ENCODE measurements at regions of chr2 and their contacts with region 1.

Region 1: DNA sequence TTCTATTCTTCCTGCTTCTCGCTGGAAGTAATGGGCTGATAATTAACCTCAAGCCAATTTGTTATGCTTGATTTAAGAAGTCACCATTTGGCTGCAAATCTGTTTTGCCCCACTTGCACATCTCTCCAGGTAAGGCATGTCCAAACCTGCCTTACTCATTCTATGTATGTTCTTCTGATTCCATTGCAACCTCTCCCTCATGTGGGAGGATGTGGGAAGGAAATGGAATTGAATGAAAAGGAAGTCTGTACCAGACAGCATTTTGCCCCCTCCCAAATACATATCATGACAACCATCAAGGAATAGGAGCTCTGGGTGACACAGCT is 131.7 kb downstream of the NRP2 start:
- DNase-seq: no peak
- H3K4me3 ChIP-seq: no peak overlapping the region; a peak in 1 of 8 replicates
- H3K27ac ChIP-seq: no peak overlapping the region
- H3K4me1 ChIP-seq: peaks cover 0 to 6% (median 1%) of the 10 kb centered on the region in 4 experiments; a peak in 3 of 7 replicates
- H3K27me3 ChIP-seq: no peaks in the 10 kb centered on the region
- CTCF ChIP-seq: no peak
- EP300 ChIP-seq: no peak
- POLR2A ChIP-seq: no peak
- RAD21 ChIP-seq: no peak

Region 2: GRCh38 chr2:205769495-205769850 is 44.5 kb before region 1 on chr2:
- CTCF ChIA-PET with region 1: interaction called, 64 read pairs
- POLR2A ChIA-PET with region 1: no interaction called
- DNase-seq: no peak
- H3K4me3 ChIP-seq: no peak overlapping the region
- H3K27ac ChIP-seq: no peak overlapping the region
- H3K4me1 ChIP-seq: peaks cover 0 to 7% (median 4%) of the 10 kb centered on the region in 4 experiments; a peak in 6 of 7 replicates
- H3K27me3 ChIP-seq: no peaks in the 10 kb centered on the region
- CTCF ChIP-seq: no peak
- EP300 ChIP-seq: no peak
- POLR2A ChIP-seq: no peak
- RAD21 ChIP-seq: no peak

Region 3: DNA sequence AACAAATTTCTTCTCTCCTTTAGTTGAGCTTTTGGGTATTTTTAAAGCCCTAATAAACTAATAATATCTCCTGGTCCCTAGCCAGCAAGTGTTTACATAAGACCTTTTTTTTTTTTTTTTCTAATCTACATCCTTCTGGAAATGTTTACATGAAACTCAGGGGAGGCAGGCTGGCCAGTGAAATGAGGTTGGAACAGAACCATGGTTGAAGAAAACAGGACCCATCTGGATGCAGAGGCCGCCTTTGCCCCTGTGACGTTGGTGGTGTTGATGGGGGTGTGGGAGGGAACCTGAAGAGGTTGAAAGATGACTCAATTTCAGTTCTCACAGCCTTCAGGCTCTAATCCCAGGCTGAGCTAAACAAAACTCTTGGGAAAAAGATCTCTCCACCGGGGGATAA is 13.2 kb before region 1 on chr2:
- CTCF ChIA-PET with region 1: interaction called, 18 read pairs
- POLR2A ChIA-PET with region 1: interaction called, 3 read pairs
- DNase-seq: no peak
- H3K4me3 ChIP-seq: no peak overlapping the region
- H3K27ac ChIP-seq: no peak overlapping the region
- H3K4me1 ChIP-seq: peaks cover 0 to 14% (median 4%) of the 10 kb centered on the region in 4 experiments; a peak in 4 of 7 replicates
- H3K27me3 ChIP-seq: no peaks in the 10 kb centered on the region
- CTCF ChIP-seq: no peak
- EP300 ChIP-seq: no peak
- POLR2A ChIP-seq: no peak
- RAD21 ChIP-seq: no peak

Region 4: GRCh38 chr2:205827809-205828365 is 13.9 kb after region 1 on chr2:
- CTCF ChIA-PET with region 1: interaction called, 38 read pairs
- POLR2A ChIA-PET with region 1: no interaction called
- DNase-seq: no peak
- H3K4me3 ChIP-seq: no peak overlapping the region
- H3K27ac ChIP-seq: no peak overlapping the region
- H3K4me1 ChIP-seq: peaks cover 0 to 5% (median 1%) of the 10 kb centered on the region in 4 experiments; a peak in 2 of 7 replicates
- H3K27me3 ChIP-seq: no peaks in the 10 kb centered on the region
- CTCF ChIP-seq: no peak
- EP300 ChIP-seq: no peak
- POLR2A ChIP-seq: no peak
- RAD21 ChIP-seq: no peak

Region 5: GRCh38 chr2:205957452-205958154 is 143.6 kb after region 1 on chr2:
- CTCF ChIA-PET with region 1: no interaction called
- POLR2A ChIA-PET with region 1: no interaction called
- DNase-seq: no peak
- H3K4me3 ChIP-seq: no peak overlapping the region
- H3K27ac ChIP-seq: no peak overlapping the region
- H3K4me1 ChIP-seq: peaks cover 0 to 6% (median 2%) of the 10 kb centered on the region in 4 experiments; a peak in 2 of 7 replicates
- H3K27me3 ChIP-seq: no peaks in the 10 kb centered on the region
- CTCF ChIP-seq: no peak
- EP300 ChIP-seq: no peak
- POLR2A ChIP-seq: no peak
- RAD21 ChIP-seq: no peak

Measured in H1 (cell line).